HepG2 (cell line): ENCODE measurements at regions of chr2 and their contacts with region 1.

Region 1: GRCh38 chr2:200795044-200795443 is 16.7 kb upstream of the BZW1 start:
- DNase-seq: peak; percentile 25
- ATAC-seq: peak; percentile 71
- H3K4me3 ChIP-seq: no peak overlapping the region
- H3K27ac ChIP-seq: no peak overlapping the region
- H3K4me1 ChIP-seq: peaks cover 29% of the 10 kb centered on the region
- H3K27me3 ChIP-seq: no peaks in the 10 kb centered on the region
- CTCF ChIP-seq: peak; percentile 77
- EP300 ChIP-seq: no peak
- POLR2A ChIP-seq: no peak
- RAD21 ChIP-seq: peak; percentile 40; the same call in 1 of the 2 replicates

Region 2: GRCh38 chr2:198825534-198825933 is 1969.5 kb before region 1 on chr2:
- CTCF ChIA-PET with region 1: no interaction called
- POLR2A ChIA-PET with region 1: no interaction called
- in situ Hi-C with region 1: no loop called
- intact Hi-C with region 1: no loop called
- DNase-seq: no peak
- ATAC-seq: no peak
- H3K4me3 ChIP-seq: no peak overlapping the region
- H3K27ac ChIP-seq: no peak overlapping the region
- H3K4me1 ChIP-seq: no peaks in the 10 kb centered on the region
- H3K27me3 ChIP-seq: no peaks in the 10 kb centered on the region
- CTCF ChIP-seq: no peak
- EP300 ChIP-seq: no peak
- POLR2A ChIP-seq: no peak
- RAD21 ChIP-seq: no peak

Region 3: DNA sequence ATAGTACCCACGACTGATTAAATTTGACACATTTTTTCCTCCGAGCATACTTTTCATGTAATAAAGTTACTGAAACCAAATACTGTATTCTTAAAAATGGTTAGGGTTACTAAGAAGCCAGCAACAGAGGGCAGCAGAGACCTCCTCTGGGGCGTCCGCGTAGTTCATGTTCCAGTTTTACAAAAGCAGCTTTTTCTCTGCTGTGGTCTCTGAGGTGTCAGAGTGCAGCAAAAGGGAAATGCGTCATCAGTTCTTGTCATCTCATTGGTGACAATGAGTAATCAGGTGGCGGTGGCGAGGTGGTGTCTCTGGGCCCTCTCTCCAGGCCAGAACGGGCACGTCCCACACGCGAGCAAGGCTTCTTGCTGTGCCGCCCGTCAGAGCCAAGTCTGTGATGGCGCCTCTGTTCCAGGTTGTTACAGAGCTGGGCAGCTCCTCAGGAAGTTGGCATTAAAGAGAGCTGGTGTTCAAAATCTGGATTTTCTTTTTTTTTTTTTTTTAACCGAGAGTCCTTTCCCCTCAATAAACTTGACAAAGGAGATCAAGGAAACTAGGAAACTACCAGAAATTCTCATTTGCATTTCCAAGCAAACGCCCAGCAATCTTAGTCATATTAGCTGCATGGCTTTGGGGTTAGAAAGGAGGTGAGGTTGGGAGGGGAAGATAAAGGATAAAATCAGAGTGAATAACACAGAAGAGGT is 81.9 kb before region 1 on chr2:
- CTCF ChIA-PET with region 1: interaction called, 4 read pairs
- POLR2A ChIA-PET with region 1: no interaction called
- in situ Hi-C with region 1: no loop called
- intact Hi-C with region 1: loop called (anchors 5 kb)
- DNase-seq: peak; percentile 96
- ATAC-seq: peak; percentile 94
- H3K4me3 ChIP-seq: peak overlapping the region; percentile 35 to 65 (median 50); a peak in 5 of 6 replicates
- H3K27ac ChIP-seq: peak overlapping the region; percentile 41
- H3K4me1 ChIP-seq: peaks cover 20% of the 10 kb centered on the region
- H3K27me3 ChIP-seq: no peaks in the 10 kb centered on the region; a peak in 1 of 5 replicates
- CTCF ChIP-seq: peak; percentile 94
- EP300 ChIP-seq: peak in 1 of 2 experiments; percentile 47; a peak in 1 of 4 replicates
- POLR2A ChIP-seq: peak; percentile 74 to 92
- RAD21 ChIP-seq: peak; percentile 93

Region 4: GRCh38 chr2:200765139-200765951 is 29.7 kb before region 1 on chr2:
- CTCF ChIA-PET with region 1: no interaction called
- POLR2A ChIA-PET with region 1: no interaction called
- in situ Hi-C with region 1: no loop called
- intact Hi-C with region 1: loop called (anchors 2 kb)
- DNase-seq: peak; percentile 34
- ATAC-seq: peak; percentile 42; the same call in 2 of the 3 replicates
- H3K4me3 ChIP-seq: no peak overlapping the region
- H3K27ac ChIP-seq: no peak overlapping the region
- H3K4me1 ChIP-seq: peaks cover 30% of the 10 kb centered on the region
- H3K27me3 ChIP-seq: peaks cover 3 to 17% of the 10 kb centered on the region in 2 experiments; a peak in 3 of 5 replicates
- CTCF ChIP-seq: no peak
- EP300 ChIP-seq: no peak
- POLR2A ChIP-seq: no peak
- RAD21 ChIP-seq: no peak

Region 5: DNA sequence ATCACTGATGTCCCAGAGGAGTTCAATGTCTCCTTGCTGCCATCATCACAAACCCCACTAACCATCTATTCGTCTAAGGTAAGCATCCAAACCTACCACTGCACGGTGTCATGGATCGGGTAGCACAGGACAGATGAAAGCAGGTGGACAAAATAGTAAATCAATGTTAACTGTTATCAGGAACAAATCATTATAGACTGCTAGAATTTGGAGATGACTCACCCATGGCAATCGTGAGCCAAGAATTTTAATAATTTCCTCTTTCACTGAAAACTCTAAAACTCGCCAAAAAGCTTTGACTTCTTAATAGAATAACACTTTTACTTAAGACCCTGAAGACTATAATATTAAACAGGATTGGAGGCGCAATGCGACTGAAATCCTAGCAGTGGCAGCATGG is 17.0 kb before region 1 on chr2:
- CTCF ChIA-PET with region 1: no interaction called
- POLR2A ChIA-PET with region 1: interaction called, 3 read pairs
- in situ Hi-C with region 1: no loop called
- intact Hi-C with region 1: loop called (anchors 2 kb)
- DNase-seq: no peak
- ATAC-seq: no peak
- H3K4me3 ChIP-seq: no peak overlapping the region
- H3K27ac ChIP-seq: no peak overlapping the region
- H3K4me1 ChIP-seq: peaks cover 30% of the 10 kb centered on the region
- H3K27me3 ChIP-seq: no peaks in the 10 kb centered on the region; a peak in 2 of 5 replicates
- CTCF ChIP-seq: no peak
- EP300 ChIP-seq: no peak
- POLR2A ChIP-seq: no peak
- RAD21 ChIP-seq: no peak

Region 6: DNA sequence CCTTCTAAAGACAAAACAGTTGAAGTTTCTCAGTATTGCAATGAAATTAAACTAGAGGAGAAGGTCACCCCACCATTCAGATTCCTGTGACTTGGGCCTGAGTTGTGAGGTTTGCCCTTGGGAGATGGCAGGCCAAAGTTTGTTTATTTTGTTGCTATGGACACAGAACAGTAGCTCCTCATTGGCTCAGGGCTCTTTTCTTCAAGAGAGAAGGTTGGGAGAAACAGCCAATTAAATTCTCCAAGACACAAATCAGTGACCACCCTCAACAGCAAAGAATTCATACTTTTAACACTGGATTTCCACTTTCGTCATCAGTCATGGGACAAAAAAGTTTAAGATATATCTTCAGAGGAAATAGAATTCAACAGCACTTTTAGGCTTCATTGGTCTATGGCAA is 562.2 kb after region 1 on chr2 and contains the start of gene FLACC1:
- CTCF ChIA-PET with region 1: no interaction called
- POLR2A ChIA-PET with region 1: no interaction called
- in situ Hi-C with region 1: no loop called
- intact Hi-C with region 1: no loop called
- DNase-seq: peak; percentile 56
- ATAC-seq: peak; percentile 80
- H3K4me3 ChIP-seq: no peak within 1 kb of the TSS
- H3K27ac ChIP-seq: peak within 1 kb of the TSS; percentile 4
- H3K4me1 ChIP-seq: peaks cover 19% of the 10 kb centered on the region
- H3K27me3 ChIP-seq: no peaks in the 10 kb centered on the region
- CTCF ChIP-seq: no peak
- EP300 ChIP-seq: no peak
- POLR2A ChIP-seq: no peak
- RAD21 ChIP-seq: no peak
- total RNA-seq, gene FLACC1: 0.29 and 0.35 TPM in 2 replicates